Mammary epithelial cell (primary cell): ENCODE measurements at regions of chr7 and their contacts with region 1.

Region 1: DNA sequence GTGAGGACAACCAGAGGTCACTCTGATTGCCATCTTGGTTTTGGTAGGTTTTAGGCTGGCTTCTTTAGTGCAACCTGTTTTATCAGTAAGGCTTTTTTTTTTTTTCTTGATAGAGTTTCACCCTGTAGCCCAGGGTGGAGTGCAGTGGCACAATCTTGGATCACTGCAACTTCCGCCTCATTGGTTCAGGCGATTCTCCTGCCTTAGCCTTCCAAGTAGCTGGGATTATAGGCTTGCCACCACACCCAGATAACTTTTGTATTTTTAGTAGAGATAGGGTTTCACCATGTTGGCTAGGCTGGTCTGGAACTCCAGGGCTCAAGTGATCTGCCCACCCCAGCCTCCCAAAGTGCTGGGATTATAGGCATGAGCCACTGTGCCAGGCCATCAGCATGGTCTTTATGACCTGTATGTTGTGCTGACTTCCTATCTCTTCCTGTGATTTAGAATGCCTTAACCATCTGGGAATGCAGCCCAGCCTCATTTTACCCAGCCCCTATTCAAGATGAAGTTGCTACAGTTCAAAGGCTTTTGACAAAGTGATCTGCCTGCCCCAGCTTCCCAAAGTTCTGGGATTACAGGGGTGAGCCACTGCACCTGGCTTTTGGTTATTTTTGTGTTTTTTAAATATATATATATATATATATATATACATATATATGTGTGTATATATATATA is 7.0 kb upstream of the ZNF425 start:
- DNase-seq: no peak
- H3K4me3 ChIP-seq: no peak overlapping the region
- H3K27ac ChIP-seq: no peak overlapping the region
- H3K4me1 ChIP-seq: peaks cover 1% of the 10 kb centered on the region
- H3K27me3 ChIP-seq: no peaks in the 10 kb centered on the region
- CTCF ChIP-seq: no peak

Region 2: DNA sequence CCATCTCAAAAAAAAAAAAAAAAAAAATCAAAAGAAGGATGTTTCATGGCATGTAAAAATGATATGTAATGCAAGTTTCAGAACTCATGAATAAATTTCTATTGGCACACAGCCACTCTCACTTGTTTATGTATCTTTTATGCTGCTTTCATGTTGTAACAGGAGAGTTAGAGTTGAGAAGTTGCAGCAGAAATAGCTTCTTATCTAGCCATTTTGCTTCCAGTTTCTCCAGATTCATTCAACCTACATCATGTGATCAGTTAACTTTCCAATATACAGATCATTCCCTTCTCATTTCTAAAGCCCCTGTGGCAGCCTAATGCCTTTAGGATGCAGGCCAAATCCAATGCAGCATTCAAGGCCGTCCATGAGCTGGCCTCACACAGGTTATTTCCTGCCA is 73.0 kb before region 1 on chr7:
- CTCF ChIA-PET with region 1: no interaction called
- dilution Hi-C with region 1: loop called (anchors 5 kb)
- in situ Hi-C with region 1: no loop called
- intact Hi-C with region 1: no loop called
- DNase-seq: peak; percentile 8
- H3K4me3 ChIP-seq: no peak overlapping the region
- H3K27ac ChIP-seq: no peak overlapping the region
- H3K4me1 ChIP-seq: no peaks in the 10 kb centered on the region
- H3K27me3 ChIP-seq: no peaks in the 10 kb centered on the region
- CTCF ChIP-seq: no peak

Region 3: DNA sequence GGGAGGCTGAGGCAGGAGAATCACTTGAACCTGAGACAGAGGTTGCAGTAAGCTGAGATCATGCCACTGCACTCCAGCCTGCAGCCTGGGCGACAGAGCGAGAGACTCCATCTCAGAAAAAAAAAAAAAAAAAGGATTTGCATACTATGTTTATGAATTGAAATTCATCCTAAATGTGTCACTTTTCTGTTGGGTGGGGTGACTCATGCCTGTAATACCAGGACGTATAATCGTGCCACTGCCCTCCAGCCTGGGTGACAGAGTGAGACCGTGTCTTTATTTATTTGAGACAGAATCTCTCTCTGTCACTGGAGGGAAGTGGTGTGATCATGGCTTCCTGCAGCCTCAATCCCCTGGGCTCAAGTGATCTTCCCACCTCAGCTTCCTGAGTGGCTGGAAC is 112.1 kb after region 1 on chr7:
- CTCF ChIA-PET with region 1: no interaction called
- dilution Hi-C with region 1: loop called (anchors 5 kb)
- in situ Hi-C with region 1: no loop called
- intact Hi-C with region 1: no loop called
- DNase-seq: no peak
- H3K4me3 ChIP-seq: no peak overlapping the region
- H3K27ac ChIP-seq: no peak overlapping the region
- H3K4me1 ChIP-seq: peaks cover 5% of the 10 kb centered on the region
- H3K27me3 ChIP-seq: no peaks in the 10 kb centered on the region
- CTCF ChIP-seq: no peak